Transverse colon (tissue), 4 donors: ENCODE measurements at regions of chr20 and their contacts with region 1.

Region 1: DNA sequence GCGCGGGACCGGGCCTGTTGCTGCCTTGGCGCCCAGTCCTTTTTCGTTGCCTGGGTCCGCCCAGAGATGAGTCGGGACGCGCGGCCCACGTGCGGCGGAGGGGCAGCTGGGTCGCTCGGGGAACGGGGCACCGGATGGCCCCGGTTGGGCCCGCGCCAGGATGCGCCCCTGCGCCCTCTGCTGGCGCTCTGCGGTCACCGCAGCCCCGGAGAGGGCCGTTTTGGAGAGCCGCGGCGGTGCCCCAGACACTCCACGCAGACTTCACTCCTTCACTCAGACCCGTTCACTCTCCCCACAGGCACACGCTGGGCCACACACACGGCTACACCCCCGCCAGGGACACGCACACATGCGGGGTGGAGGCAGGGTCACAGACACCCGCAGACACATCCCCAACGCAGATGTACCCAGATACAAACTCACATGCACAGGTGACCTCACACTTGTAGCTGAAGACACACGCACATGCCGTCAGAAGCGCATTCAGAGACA is 38.8 kb downstream of the SRC start:
- DNase-seq: peak; percentile 71
- H3K4me3 ChIP-seq: peak overlapping the region in 3 of 4 donors; percentile 24 to 37 (median 32)
- H3K27ac ChIP-seq: peak overlapping the region in 1 of 4 donors; percentile 59
- H3K4me1 ChIP-seq: peaks cover 0 to 26% (median 18%) of the 10 kb centered on the region in 4 donors
- H3K27me3 ChIP-seq: no peaks in the 10 kb centered on the region
- CTCF ChIP-seq: peak; percentile 89 to 95 (median 93)
- EP300 ChIP-seq: no peak
- POLR2A ChIP-seq: no peak

Region 2: GRCh38 chr20:37202267-37202943 is 182.3 kb before region 1 on chr20:
- in situ Hi-C with region 1: no loop called
- intact Hi-C with region 1: loop called (anchors 10 kb)
- DNase-seq: peak; percentile 26
- H3K4me3 ChIP-seq: no peak overlapping the region
- H3K27ac ChIP-seq: peak overlapping the region; percentile 51 to 66 (median 56)
- H3K4me1 ChIP-seq: peaks cover 0 to 10% (median 4%) of the 10 kb centered on the region in 4 donors
- H3K27me3 ChIP-seq: no peaks in the 10 kb centered on the region
- CTCF ChIP-seq: peak; percentile 64 to 78 (median 76)
- EP300 ChIP-seq: no peak
- POLR2A ChIP-seq: no peak

Region 3: DNA sequence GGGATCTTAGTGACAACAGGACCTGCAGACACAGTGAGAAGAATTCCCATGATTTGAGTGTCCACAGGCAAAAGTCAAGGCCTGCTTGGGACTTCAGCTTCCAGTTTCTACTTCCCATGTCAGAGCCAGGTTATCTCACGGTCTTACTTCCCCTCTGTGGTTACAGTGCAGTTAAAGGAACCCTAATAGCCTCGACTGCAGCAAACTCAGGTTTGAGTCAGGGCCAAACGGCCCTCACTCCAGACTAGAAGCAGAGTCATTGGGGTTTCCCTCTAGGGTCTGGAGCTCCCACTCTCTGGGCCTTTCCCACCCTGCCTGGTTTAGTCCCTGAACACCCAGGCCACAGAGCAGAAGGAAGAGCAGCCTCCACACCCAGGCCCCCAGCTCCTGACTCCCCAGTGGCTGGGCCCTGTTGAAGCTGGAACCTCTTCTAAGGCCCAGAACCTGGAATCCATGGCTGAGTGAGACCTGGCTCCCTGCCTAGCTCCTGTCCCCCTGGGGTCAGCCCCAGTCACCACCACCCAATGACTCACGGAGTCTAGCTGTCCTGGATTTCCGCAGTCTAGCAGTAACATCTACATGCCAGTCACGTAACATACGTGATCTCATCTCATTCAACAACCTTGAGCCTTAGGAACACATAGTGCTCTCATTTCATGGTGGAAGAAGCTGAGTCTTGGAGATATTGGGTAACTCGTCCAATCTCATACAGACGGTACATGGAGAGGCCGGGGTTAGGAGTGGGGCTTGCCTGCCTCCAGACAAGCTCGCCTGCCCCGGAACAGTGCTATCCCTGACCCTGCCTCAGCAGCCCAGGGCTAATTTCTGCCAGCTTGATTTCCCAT is 113.9 kb before region 1 on chr20:
- in situ Hi-C with region 1: loop called (anchors 5 to 10 kb)
- intact Hi-C with region 1: no loop called
- DNase-seq: no peak
- H3K4me3 ChIP-seq: no peak overlapping the region
- H3K27ac ChIP-seq: peak overlapping the region in 3 of 4 donors; percentile 15 to 24 (median 21)
- H3K4me1 ChIP-seq: peaks cover 0 to 5% (median 2%) of the 10 kb centered on the region in 4 donors
- H3K27me3 ChIP-seq: no peaks in the 10 kb centered on the region
- CTCF ChIP-seq: no peak
- EP300 ChIP-seq: no peak
- POLR2A ChIP-seq: no peak

Region 4: DNA sequence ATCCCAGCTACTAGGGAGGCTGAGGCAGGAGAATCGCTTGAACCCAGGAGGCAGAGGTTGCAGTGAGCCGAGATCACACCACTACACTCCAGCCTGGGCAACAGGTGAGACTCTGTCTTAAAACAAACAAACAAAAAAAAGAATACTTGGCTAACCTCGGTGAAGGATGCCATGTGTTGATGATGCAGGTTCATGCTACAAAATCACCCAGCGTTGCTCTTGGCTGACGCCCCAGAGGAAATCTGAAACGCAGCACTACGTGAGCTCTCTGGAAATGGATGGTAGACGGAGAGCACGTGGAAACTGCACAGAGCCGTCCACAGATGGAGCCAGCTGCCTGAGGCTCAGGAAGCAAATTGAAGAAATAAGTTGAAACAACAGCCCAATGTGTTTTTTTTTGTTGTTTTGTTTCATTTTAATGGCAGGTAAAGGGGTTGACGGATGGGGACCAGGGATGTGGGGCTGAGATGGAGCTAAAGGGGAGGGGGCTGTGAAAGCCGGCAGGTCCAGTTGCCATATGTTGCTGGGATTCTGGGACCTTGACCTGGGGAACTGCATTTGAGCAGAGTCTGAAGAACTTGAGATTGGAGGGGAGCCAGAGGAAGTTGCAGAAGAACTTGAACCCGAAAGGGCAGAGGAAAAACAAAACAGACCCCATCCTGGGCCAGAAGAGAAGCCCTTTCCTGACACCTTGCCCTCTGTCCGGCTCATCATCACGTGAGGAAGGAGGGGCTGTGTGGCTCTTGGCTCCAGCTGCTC is 108.1 kb before region 1 on chr20:
- in situ Hi-C with region 1: loop called (anchors 5 to 10 kb)
- intact Hi-C with region 1: no loop called
- DNase-seq: peak; percentile 56
- H3K4me3 ChIP-seq: no peak overlapping the region
- H3K27ac ChIP-seq: peak overlapping the region; percentile 38 to 66 (median 58)
- H3K4me1 ChIP-seq: peaks cover 5 to 20% (median 8%) of the 10 kb centered on the region in 4 donors
- H3K27me3 ChIP-seq: no peaks in the 10 kb centered on the region
- CTCF ChIP-seq: peak in 2 of 5 experiments; percentile 26 to 40
- EP300 ChIP-seq: no peak
- POLR2A ChIP-seq: no peak

Region 5: DNA sequence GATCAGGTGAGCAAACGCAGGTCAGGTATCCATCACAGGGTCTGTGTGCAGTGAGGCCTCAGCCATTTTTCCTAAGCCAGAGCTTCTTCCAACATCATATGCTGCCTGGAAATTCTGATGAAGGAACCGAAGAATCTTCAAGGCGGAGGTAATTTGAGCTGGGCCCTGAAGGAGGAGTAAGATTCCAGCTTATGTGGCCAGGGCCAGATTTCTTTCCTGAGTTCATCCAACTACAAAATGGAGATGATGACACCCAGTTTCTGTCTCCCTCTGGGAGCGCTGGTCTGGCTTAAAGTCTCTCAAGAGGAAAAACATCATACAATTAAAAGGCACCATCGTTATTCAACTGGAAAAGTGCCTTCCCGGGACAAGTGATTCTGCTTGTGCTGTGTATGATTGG is 102.2 kb before region 1 on chr20:
- in situ Hi-C with region 1: loop called in 3 of 4 experiments (anchors 5 to 10 kb)
- intact Hi-C with region 1: loop called (anchors 2 kb)
- DNase-seq: peak; percentile 19
- H3K4me3 ChIP-seq: no peak overlapping the region
- H3K27ac ChIP-seq: peak overlapping the region in 3 of 4 donors; percentile 3 to 52 (median 40)
- H3K4me1 ChIP-seq: peaks cover 0 to 2% (median 0%) of the 10 kb centered on the region in 4 donors
- H3K27me3 ChIP-seq: no peaks in the 10 kb centered on the region
- CTCF ChIP-seq: peak; percentile 33 to 51 (median 41)
- EP300 ChIP-seq: no peak
- POLR2A ChIP-seq: no peak

Region 6: GRCh38 chr20:37990571-37991151 is 605.9 kb after region 1 on chr20:
- in situ Hi-C with region 1: no loop called
- intact Hi-C with region 1: loop called (anchors 10 kb)
- DNase-seq: peak; percentile 76
- H3K4me3 ChIP-seq: no peak overlapping the region
- H3K27ac ChIP-seq: peak overlapping the region; percentile 24 to 53 (median 48)
- H3K4me1 ChIP-seq: peaks cover 14 to 63% (median 49%) of the 10 kb centered on the region in 4 donors
- H3K27me3 ChIP-seq: no peaks in the 10 kb centered on the region
- CTCF ChIP-seq: no peak
- EP300 ChIP-seq: peak; percentile 56
- POLR2A ChIP-seq: no peak